ACHN (cell line): ENCODE measurements at regions of chr3 and their contacts with region 1.

Region 1: GRCh38 chr3:138915503-138916498 is 31.1 kb downstream of the FOXL2 start:
- DNase-seq: peak; percentile 90

Region 2: DNA sequence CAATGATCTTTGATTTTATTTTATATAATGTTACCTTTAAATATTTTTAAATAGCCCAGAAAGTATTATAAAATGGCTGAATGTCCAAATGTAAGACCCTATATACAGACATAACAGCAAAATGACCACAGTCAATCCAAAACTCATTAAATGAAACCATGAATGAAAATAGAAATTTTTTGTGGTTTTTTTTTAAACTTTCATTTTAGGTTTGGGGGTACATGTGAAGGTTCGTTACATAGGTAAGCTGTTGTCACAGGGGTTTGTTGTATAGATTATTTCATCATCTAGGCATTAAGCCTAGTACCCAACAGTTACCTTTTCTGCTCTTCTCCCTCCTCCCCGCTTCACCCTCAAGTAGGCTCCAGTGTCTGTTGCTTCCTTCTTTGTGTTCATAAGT is 198.5 kb before region 1 on chr3:
- in situ Hi-C with region 1: loop called (anchors 25 kb)
- DNase-seq: no peak

Region 3: DNA sequence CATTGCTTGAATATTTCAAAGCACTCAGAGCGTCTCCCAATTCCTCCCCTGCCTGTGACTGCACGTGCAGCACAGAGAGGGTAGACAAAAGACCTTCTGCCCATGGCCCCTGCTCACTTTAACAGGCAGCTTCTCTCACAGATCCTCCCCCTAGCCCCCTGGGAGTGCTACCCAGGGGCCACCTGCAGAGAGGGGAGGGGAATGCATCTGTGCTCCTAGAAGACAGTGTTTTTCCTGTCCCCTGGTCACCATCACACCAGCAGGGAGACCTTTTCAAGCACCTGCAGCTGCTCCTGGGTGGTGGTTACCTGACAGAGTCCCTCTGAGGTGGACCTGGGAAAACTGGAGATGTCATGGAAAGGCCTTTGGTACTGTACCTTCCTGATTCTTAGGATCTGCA is 185.6 kb after region 1 on chr3:
- in situ Hi-C with region 1: no loop called
- DNase-seq: no peak